CD4-positive, alpha-beta T cell (primary cell): ENCODE measurements at regions of chr11 and their contacts with region 1.

Region 1: GRCh38 chr11:32006799-32007388 is 84.0 kb upstream of the RCN1 start:
- DNase-seq: peak in 3 of 14 experiments; percentile 40 to 45 (median 43)
- ATAC-seq: no peak
- H3K4me3 ChIP-seq: no peak overlapping the region
- H3K4me3 Mint-ChIP-seq: no peak overlapping the region
- H3K27ac ChIP-seq: no peak overlapping the region
- H3K27ac Mint-ChIP-seq: no peak overlapping the region
- H3K4me1 ChIP-seq: no peaks in the 10 kb centered on the region
- H3K4me1 Mint-ChIP-seq: no peaks in the 10 kb centered on the region
- H3K27me3 ChIP-seq: peaks cover 8 to 13% of the 10 kb centered on the region in 2 experiments
- H3K27me3 Mint-ChIP-seq: peaks cover 56% of the 10 kb centered on the region
- CTCF ChIP-seq: peak; percentile 41

Region 2: GRCh38 chr11:31107062-31107461 is 899.8 kb before region 1 on chr11:
- CTCF ChIA-PET with region 1: no interaction called
- POLR2A ChIA-PET with region 1: no interaction called
- intact Hi-C with region 1: loop called in 1 of 2 experiments (anchors 10 kb)
- DNase-seq: peak; percentile 1 to 53 (median 16)
- ATAC-seq: no peak
- H3K4me3 ChIP-seq: no peak overlapping the region
- H3K4me3 Mint-ChIP-seq: no peak overlapping the region
- H3K27ac ChIP-seq: no peak overlapping the region
- H3K27ac Mint-ChIP-seq: no peak overlapping the region
- H3K4me1 ChIP-seq: no peaks in the 10 kb centered on the region
- H3K4me1 Mint-ChIP-seq: no peaks in the 10 kb centered on the region
- H3K27me3 ChIP-seq: no peaks in the 10 kb centered on the region
- H3K27me3 Mint-ChIP-seq: no peaks in the 10 kb centered on the region
- CTCF ChIP-seq: no peak

Region 3: DNA sequence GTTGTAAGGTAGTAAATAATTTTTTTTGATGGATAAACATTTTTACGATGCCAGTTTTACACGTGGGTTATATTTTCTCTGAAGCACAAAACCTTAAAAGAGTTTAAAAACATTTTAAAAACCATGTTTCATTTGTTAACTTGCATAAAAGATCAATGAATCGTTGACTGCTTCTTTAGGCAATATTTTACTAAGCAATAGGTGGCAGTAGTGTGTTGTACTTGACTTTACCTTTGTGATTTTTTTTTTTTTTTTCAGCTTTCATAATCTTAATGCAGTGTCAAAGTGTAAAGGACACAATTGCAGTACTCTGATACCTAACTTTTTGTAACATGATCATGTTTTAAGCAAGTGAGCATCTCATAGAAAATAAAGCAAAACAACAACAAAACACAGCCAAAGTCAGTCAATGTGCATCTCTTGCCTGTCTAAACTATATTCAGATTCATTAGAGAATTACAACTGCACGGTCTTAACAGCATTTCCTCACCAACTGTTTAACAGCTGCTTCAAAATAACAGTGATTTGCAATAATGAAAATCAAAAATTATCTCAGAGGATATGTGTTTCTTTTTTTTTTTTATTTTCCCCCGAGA is 609.6 kb before region 1 on chr11:
- CTCF ChIA-PET with region 1: no interaction called
- POLR2A ChIA-PET with region 1: no interaction called
- intact Hi-C with region 1: loop called (anchors 2 to 5 kb)
- DNase-seq: peak in 3 of 14 experiments; percentile 33 to 45 (median 38)
- ATAC-seq: no peak
- H3K4me3 ChIP-seq: no peak overlapping the region
- H3K4me3 Mint-ChIP-seq: no peak overlapping the region
- H3K27ac ChIP-seq: no peak overlapping the region
- H3K27ac Mint-ChIP-seq: no peak overlapping the region
- H3K4me1 ChIP-seq: no peaks in the 10 kb centered on the region
- H3K4me1 Mint-ChIP-seq: no peaks in the 10 kb centered on the region
- H3K27me3 ChIP-seq: no peaks in the 10 kb centered on the region
- H3K27me3 Mint-ChIP-seq: no peaks in the 10 kb centered on the region
- CTCF ChIP-seq: peak; percentile 60

Region 4: DNA sequence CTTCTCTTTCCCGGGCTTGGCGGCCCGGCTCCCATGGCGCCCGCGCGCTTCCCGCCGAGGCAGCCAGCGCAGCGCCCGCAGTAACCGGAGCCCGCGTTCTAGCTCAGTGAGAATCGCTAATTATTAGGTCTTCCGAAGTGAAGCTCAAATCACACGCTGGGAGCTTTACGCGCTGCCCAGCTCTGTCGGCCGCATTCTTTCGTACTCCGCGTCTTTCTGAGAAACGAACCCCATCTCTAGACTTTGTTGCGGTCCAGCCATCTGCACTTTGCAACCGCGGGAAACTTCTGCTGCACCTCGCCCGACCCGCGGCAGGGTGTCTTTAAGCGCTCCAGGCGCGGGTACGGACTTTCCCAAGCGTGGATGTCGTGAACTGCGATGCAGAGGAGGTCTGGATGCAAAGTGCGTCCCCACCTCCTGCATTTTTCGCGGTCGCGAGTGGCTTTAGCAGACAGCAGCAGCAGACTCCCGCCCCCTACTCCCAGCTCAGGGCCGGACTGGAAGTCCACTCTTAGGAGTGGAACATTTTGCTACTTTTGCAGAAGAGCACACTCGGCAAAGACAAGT is 189.8 kb before region 1 on chr11:
- CTCF ChIA-PET with region 1: no interaction called
- POLR2A ChIA-PET with region 1: no interaction called
- intact Hi-C with region 1: no loop called
- DNase-seq: no peak
- ATAC-seq: no peak
- H3K4me3 ChIP-seq: peak overlapping the region; percentile 20
- H3K4me3 Mint-ChIP-seq: peak overlapping the region; percentile 68
- H3K27ac ChIP-seq: no peak overlapping the region
- H3K27ac Mint-ChIP-seq: no peak overlapping the region
- H3K4me1 ChIP-seq: peaks cover 68% of the 10 kb centered on the region
- H3K4me1 Mint-ChIP-seq: peaks cover 33% of the 10 kb centered on the region
- H3K27me3 ChIP-seq: peaks cover 87 to 96% of the 10 kb centered on the region in 2 experiments
- H3K27me3 Mint-ChIP-seq: peaks cover 79% of the 10 kb centered on the region
- CTCF ChIP-seq: no peak

Region 5: DNA sequence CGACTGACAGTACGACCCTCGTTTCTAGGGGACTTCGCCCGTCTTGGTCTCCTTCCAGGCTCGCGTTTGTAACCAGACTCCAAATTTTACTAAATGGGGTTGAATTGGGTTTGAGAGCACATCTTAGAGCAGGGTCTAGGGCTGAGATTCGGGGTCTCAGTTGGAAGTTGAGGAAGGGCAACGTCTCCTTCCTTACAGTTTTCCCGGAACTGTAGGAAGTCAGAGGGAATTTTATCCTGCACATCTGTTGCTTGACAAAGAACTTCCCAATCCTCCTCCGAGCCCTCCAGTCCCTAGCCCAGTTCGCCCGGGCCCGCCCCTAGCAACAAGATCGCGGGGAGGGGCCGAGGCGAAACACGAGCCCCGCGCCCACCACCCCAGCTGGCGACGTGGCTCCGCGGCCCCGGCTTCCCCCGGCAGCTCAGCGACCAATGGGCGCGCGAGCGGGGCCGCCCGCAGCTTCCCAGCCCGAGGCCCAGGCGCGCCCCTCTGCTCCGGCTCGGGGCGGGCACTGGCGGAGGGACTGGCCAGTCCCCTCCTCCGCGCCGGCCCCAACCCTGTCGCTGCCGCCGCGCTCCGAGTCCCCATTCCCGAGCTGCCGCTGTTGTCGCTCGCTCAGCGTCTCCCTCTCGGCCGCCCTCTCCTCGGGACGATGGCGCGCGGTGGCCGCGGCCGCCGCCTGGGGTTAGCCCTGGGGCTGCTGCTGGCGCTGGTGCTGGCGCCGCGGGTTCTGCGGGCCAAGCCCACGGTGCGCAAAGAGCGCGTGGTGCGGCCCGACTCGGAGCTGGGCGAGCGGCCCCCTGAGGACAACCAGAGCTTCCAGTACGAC is 83.9 kb after region 1 on chr11 and contains the start of gene RCN1:
- CTCF ChIA-PET with region 1: no interaction called
- POLR2A ChIA-PET with region 1: no interaction called
- intact Hi-C with region 1: no loop called
- DNase-seq: peak in 11 of 14 experiments; percentile 8 to 56 (median 19)
- ATAC-seq: peak; percentile 45
- H3K4me3 ChIP-seq: peak within 1 kb of the TSS; percentile 68
- H3K4me3 Mint-ChIP-seq: peak within 1 kb of the TSS; percentile 86
- H3K27ac ChIP-seq: peak within 1 kb of the TSS in 1 of 2 donors; percentile 7
- H3K27ac Mint-ChIP-seq: peak within 1 kb of the TSS; percentile 78
- H3K4me1 ChIP-seq: peaks cover 19% of the 10 kb centered on the region
- H3K4me1 Mint-ChIP-seq: peaks cover 17% of the 10 kb centered on the region
- H3K27me3 ChIP-seq: no peaks in the 10 kb centered on the region
- H3K27me3 Mint-ChIP-seq: peaks cover 23% of the 10 kb centered on the region
- CTCF ChIP-seq: no peak
- total RNA-seq, gene RCN1: 7.4 to 9.1 TPM